Cardiac septum (tissue), 1 donor: ENCODE measurements at regions of chr2 and their contacts with region 1.

Region 1: DNA sequence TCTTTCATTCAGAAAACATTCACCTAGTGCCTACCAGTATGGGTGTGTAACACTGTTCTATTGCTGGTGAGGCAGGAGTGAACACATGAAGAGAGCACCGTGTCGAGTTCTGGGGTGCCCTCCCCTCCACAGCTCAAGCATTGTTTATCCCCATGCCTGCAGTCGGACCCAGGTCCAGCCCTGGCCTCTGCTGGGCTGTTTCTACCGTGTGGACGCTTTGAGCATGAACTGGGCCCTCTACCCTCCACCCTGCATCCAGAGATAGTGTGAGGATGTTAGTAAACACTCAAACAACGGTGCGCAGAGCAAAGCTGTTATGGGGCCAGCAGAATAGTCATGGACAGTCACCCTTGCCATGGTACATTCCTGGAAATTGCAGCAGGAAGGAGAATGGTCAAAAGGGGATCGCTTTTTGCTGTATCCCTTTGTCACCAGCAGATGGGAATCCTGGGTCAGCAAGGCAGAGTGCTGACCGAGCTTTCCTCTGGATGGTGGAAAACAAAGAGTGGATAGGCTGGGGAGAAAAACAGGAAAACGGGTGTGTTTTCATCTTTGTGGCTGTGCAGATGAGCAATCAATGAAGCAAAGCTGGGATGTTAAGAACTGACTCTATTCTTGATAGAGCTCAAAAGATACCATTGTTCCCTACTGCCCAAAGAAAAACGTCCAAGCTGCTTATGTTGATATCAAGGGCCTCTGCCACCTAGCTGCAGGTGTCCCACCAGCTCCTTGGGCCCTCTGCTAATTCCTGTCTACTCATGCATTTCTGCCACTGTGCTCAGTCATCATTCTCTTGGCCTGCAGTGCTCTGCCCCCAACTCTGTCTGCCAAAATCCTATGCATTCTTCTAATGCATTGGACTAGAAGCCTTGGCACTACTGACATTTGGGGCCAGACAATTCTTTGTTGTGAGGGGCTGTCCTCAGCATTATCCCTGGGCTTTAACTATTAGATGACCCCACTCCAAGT is 38.7 kb downstream of the REEP1 start:
- DNase-seq: peak; percentile 59

Region 2: GRCh38 chr2:86368161-86368824 is 69.6 kb after region 1 on chr2:
- intact Hi-C with region 1: loop called (anchors 2 kb)
- DNase-seq: no peak

Region 3: DNA sequence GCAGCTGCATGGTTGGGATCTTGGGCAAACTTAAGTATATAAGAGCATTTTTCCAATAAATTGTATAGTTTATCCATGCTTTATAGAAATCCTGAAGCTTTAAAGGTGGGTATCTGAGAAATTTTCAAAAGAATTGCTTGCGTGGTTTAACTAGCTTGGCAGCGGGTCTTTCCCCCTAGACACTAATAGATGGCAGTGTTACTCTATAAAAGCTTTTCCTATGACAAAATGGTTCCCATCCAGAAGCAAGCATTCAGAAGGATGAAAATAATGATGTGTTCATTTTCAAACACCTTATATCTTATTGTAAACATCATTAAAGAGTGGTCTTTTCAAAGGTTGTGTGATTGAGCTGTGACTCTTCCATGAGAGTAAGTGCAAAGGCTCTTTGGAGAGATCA is 188.4 kb after region 1 on chr2:
- intact Hi-C with region 1: no loop called
- DNase-seq: no peak